ENCODE measurements at regions of chr4 and their contacts with region 1.

Region 1: GRCh38 chr4:67871867-67872266 is 11.9 kb downstream of the TMPRSS11D start:
- DNase-seq: no peak
- ATAC-seq: peak; percentile 65
- H3K4me3 Mint-ChIP-seq: no peak overlapping the region
- H3K27ac Mint-ChIP-seq: no peak overlapping the region
- H3K4me1 Mint-ChIP-seq: no peaks in the 10 kb centered on the region
- H3K27me3 Mint-ChIP-seq: peaks cover 2% of the 10 kb centered on the region

Region 2: GRCh38 chr4:67428819-67429218 is 443.0 kb before region 1 on chr4:
- CTCF ChIA-PET with region 1: no interaction called
- POLR2A ChIA-PET with region 1: no interaction called
- intact Hi-C with region 1: no loop called
- DNase-seq: no peak
- ATAC-seq: no peak
- H3K4me3 Mint-ChIP-seq: no peak overlapping the region
- H3K27ac Mint-ChIP-seq: no peak overlapping the region
- H3K4me1 Mint-ChIP-seq: no peaks in the 10 kb centered on the region
- H3K27me3 Mint-ChIP-seq: no peaks in the 10 kb centered on the region

Region 3: DNA sequence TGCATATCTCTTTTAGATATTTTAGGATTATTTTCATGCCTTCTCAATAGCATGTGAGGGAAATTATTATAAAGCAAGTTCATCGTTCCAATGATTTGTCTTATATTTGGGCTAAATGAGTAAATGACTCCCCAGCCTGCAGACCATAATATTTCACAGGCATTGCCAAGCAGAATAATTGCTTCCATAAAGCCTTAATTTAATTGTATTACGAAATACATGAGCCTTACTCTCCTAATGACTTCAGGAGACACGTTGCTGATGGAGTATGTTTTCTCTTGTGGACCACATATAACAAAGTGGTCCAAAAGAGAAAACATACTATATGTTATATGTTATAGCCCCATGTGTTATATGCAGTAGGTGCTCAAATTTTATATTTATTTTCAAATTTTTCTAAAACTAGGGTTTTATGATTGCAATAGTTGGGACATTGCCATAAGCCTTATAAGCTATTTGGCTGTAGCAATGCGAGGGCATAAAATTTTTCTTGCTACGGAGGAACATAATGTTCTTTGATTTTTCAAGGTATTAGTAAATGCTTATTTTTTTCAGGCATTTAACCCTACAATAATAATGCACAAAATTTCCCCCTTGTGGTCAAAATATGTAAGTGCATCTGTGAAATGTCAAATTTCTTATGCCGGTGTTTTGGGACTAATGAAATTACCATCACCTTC is 38.2 kb after region 1 on chr4:
- CTCF ChIA-PET with region 1: interaction called, 4 read pairs
- POLR2A ChIA-PET with region 1: no interaction called
- intact Hi-C with region 1: loop called (anchors 1 to 2 kb)
- DNase-seq: no peak
- ATAC-seq: no peak
- H3K4me3 Mint-ChIP-seq: no peak overlapping the region
- H3K27ac Mint-ChIP-seq: no peak overlapping the region
- H3K4me1 Mint-ChIP-seq: no peaks in the 10 kb centered on the region
- H3K27me3 Mint-ChIP-seq: peaks cover 9% of the 10 kb centered on the region